ENCODE measurements at regions of chr1 and their contacts with region 1.

Region 1: DNA sequence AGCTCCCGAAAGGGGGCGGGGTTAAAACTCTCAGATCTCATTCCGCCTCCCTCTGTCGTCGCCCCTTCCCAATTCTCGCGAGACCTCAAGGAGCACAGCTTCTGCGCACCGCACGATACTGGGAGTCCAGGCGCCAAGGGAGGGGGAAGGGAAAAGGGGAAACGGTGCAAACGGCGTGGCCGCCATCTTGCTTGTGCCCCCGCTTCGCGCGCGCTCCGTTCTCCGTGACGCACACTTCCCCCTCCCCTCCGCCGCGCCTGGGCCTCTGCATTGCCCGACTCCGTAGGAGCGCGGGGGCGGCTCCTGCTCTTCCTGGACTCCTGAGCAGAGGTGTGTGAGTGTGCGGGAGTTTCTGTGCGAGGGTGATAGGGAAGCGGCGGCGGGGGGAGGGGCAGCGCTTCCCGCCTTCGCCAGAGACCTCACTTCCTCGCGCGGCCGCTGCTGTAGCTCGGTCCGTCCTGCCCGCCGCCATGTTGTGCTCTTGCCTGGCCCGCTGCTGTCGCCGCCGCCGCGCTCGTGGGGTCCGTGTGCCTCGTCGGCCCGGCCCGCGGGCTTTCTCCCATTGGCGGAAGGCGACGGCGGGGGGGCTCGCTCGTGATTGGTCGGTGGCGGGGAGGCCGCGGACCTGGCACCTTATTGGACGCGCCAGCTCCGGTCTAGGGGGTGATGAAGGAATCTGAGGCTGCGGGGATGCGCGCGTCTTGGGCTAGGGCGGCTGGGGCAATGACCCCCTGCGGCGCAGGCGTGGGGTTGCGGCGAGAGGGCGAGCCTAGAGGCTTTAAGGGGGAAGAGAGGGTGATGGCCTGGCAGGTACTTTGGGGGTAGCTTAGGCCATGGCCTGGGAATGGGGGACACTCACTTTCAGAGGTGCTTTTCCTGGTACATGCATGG is at the start of gene NFYC:
- DNase-seq: peak; percentile 88 to 99 (median 93)
- ATAC-seq: peak; percentile 77
- H3K4me3 ChIP-seq: peak within 1 kb of the TSS; percentile 67 to 97
- H3K4me3 Mint-ChIP-seq: peak within 1 kb of the TSS; percentile 92
- H3K27ac ChIP-seq: peak within 1 kb of the TSS; percentile 92 to 99
- H3K27ac Mint-ChIP-seq: peak within 1 kb of the TSS; percentile 96
- H3K4me1 ChIP-seq: peaks cover 25% of the 10 kb centered on the region
- H3K4me1 Mint-ChIP-seq: peaks cover 61% of the 10 kb centered on the region
- H3K27me3 ChIP-seq: no peaks in the 10 kb centered on the region
- H3K27me3 Mint-ChIP-seq: no peaks in the 10 kb centered on the region
- CTCF ChIP-seq: no peak
- total RNA-seq, gene NFYC: 31.3 to 31.6 TPM

Region 2: GRCh38 chr1:39575191-39576015 is 1116.4 kb before region 1 on chr1:
- CTCF ChIA-PET with region 1: no interaction called
- POLR2A ChIA-PET with region 1: no interaction called
- intact Hi-C with region 1: loop called in 1 of 2 experiments (anchors 5 kb)
- DNase-seq: peak; percentile 16 to 78 (median 57)
- ATAC-seq: peak; percentile 65
- H3K4me3 ChIP-seq: peak overlapping the region; percentile 64 to 75
- H3K4me3 Mint-ChIP-seq: peak overlapping the region; percentile 93
- H3K27ac ChIP-seq: peak overlapping the region; percentile 68 to 72
- H3K27ac Mint-ChIP-seq: peak overlapping the region; percentile 92
- H3K4me1 ChIP-seq: peaks cover 41% of the 10 kb centered on the region
- H3K4me1 Mint-ChIP-seq: peaks cover 44% of the 10 kb centered on the region
- H3K27me3 ChIP-seq: no peaks in the 10 kb centered on the region
- H3K27me3 Mint-ChIP-seq: no peaks in the 10 kb centered on the region
- CTCF ChIP-seq: no peak

Region 3: DNA sequence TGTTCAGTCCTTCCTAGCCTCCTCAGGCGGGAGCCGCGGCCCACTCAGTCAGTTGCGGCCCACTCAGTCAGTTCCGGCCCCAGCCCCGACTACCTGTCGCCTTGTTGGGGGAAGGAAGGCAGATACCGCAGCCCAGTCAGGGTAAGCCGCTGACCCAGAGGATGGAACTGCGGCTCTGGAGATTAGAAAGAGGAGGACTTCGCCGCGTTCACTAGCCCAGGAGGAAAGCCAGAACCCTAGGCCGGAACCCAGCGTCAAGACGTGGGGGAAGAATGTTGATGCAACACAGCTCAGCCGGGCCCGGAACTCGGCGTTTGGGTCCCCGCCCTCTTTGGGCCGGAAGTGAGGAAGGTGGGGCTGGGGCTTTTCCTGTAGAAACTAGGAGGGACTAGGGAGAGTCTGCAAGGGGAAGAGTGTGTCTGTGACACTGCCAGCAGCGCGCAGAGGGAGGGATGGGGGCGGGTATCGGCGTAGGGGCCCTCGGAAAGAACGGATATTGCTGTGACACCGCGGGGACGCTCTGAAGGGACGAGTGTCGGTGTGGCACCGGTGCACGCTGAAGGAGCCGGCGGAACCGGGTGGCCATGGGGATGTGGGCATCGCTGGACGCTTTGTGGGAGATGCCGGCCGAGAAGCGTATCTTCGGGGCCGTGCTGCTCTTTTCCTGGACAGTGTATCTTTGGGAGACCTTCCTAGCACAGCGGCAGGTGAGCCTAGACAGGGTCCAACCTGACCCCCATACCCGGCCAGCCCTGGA is 433.9 kb before region 1 on chr1 and contains the start of gene ZMPSTE24:
- CTCF ChIA-PET with region 1: no interaction called
- POLR2A ChIA-PET with region 1: no interaction called
- intact Hi-C with region 1: loop called in 1 of 2 experiments (anchors 5 kb)
- DNase-seq: peak; percentile 92 to 99 (median 95)
- ATAC-seq: peak; percentile 95
- H3K4me3 ChIP-seq: peak within 1 kb of the TSS; percentile 95 to 98
- H3K4me3 Mint-ChIP-seq: peak within 1 kb of the TSS; percentile 98
- H3K27ac ChIP-seq: peak within 1 kb of the TSS; percentile 88 to 99
- H3K27ac Mint-ChIP-seq: peak within 1 kb of the TSS; percentile 100
- H3K4me1 ChIP-seq: peaks cover 20% of the 10 kb centered on the region
- H3K4me1 Mint-ChIP-seq: peaks cover 56% of the 10 kb centered on the region
- H3K27me3 ChIP-seq: no peaks in the 10 kb centered on the region
- H3K27me3 Mint-ChIP-seq: no peaks in the 10 kb centered on the region
- CTCF ChIP-seq: no peak
- total RNA-seq, gene ZMPSTE24: 11.5 to 12.2 TPM

Region 4: GRCh38 chr1:40636767-40637166 is 55.0 kb before region 1 on chr1:
- CTCF ChIA-PET with region 1: no interaction called
- POLR2A ChIA-PET with region 1: no interaction called
- intact Hi-C with region 1: no loop called
- DNase-seq: no peak
- ATAC-seq: no peak
- H3K4me3 ChIP-seq: no peak overlapping the region
- H3K4me3 Mint-ChIP-seq: no peak overlapping the region
- H3K27ac ChIP-seq: no peak overlapping the region
- H3K27ac Mint-ChIP-seq: no peak overlapping the region
- H3K4me1 ChIP-seq: peaks cover 18% of the 10 kb centered on the region
- H3K4me1 Mint-ChIP-seq: peaks cover 15% of the 10 kb centered on the region
- H3K27me3 ChIP-seq: no peaks in the 10 kb centered on the region
- H3K27me3 Mint-ChIP-seq: no peaks in the 10 kb centered on the region
- CTCF ChIP-seq: no peak

Region 5: GRCh38 chr1:40668769-40669525 is 22.8 kb before region 1 on chr1:
- CTCF ChIA-PET with region 1: interaction called, 6 read pairs
- POLR2A ChIA-PET with region 1: interaction called, 10 read pairs
- intact Hi-C with region 1: loop called (anchors 1 to 2 kb)
- DNase-seq: peak; percentile 71 to 88 (median 86)
- ATAC-seq: peak; percentile 78
- H3K4me3 ChIP-seq: peak overlapping the region; percentile 37 to 46
- H3K4me3 Mint-ChIP-seq: peak overlapping the region; percentile 37
- H3K27ac ChIP-seq: no peak overlapping the region
- H3K27ac Mint-ChIP-seq: no peak overlapping the region
- H3K4me1 ChIP-seq: peaks cover 15% of the 10 kb centered on the region
- H3K4me1 Mint-ChIP-seq: peaks cover 13% of the 10 kb centered on the region
- H3K27me3 ChIP-seq: no peaks in the 10 kb centered on the region
- H3K27me3 Mint-ChIP-seq: no peaks in the 10 kb centered on the region
- CTCF ChIP-seq: peak; percentile 90

Region 6: GRCh38 chr1:40709100-40709801 is 17.5 kb after region 1 on chr1:
- CTCF ChIA-PET with region 1: interaction called, 3 read pairs
- POLR2A ChIA-PET with region 1: interaction called, 56 read pairs
- intact Hi-C with region 1: loop called (anchors 1 kb)
- DNase-seq: peak; percentile 43 to 94 (median 74)
- ATAC-seq: peak; percentile 95
- H3K4me3 ChIP-seq: peak overlapping the region; percentile 63
- H3K4me3 Mint-ChIP-seq: peak overlapping the region; percentile 99
- H3K27ac ChIP-seq: peak overlapping the region; percentile 67 to 94
- H3K27ac Mint-ChIP-seq: peak overlapping the region; percentile 98
- H3K4me1 ChIP-seq: peaks cover 48% of the 10 kb centered on the region
- H3K4me1 Mint-ChIP-seq: peaks cover 69% of the 10 kb centered on the region
- H3K27me3 ChIP-seq: no peaks in the 10 kb centered on the region
- H3K27me3 Mint-ChIP-seq: no peaks in the 10 kb centered on the region
- CTCF ChIP-seq: no peak

Region 7: DNA sequence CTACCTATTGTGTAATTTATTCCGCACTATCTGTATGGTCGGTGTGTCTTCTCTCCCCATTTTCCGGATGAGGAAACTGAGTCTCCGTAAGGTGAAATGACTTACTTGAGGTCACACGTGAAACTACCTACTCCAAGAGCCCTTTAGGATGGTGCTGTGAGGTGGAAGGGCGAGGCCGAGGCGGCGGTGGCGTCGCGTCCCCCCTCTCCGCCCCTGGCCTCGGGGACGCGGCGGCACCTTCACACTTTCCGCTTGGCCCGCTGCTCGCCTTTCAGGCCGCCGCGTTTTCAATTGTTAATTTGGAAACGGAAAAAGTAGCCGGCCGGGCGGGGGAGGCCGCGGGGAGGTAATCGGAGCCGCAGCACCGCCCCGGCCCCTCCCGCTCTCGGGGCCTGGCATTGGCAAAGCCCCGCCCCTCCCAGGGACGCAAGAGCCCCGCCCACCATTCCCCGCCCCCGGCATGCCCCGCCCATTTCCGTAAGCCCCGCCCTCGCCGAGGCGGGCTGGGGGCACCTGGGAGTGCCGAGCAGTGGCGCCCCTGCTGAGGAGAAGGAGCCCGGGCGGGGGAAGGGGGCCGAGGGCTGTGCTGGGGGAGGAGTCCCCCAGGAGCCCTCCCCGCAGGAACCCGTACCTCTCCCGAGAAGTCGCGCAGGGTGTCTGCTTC is 110.4 kb after region 1 on chr1:
- CTCF ChIA-PET with region 1: no interaction called
- POLR2A ChIA-PET with region 1: interaction called, 8 read pairs
- intact Hi-C with region 1: loop called (anchors 1 to 5 kb)
- DNase-seq: peak; percentile 69 to 93 (median 84)
- ATAC-seq: peak; percentile 95
- H3K4me3 ChIP-seq: peak overlapping the region; percentile 51 to 87
- H3K4me3 Mint-ChIP-seq: peak overlapping the region; percentile 74
- H3K27ac ChIP-seq: peak overlapping the region; percentile 49 to 55
- H3K27ac Mint-ChIP-seq: peak overlapping the region; percentile 75
- H3K4me1 ChIP-seq: peaks cover 29% of the 10 kb centered on the region
- H3K4me1 Mint-ChIP-seq: peaks cover 30% of the 10 kb centered on the region
- H3K27me3 ChIP-seq: no peaks in the 10 kb centered on the region
- H3K27me3 Mint-ChIP-seq: no peaks in the 10 kb centered on the region
- CTCF ChIP-seq: no peak

Region 8: DNA sequence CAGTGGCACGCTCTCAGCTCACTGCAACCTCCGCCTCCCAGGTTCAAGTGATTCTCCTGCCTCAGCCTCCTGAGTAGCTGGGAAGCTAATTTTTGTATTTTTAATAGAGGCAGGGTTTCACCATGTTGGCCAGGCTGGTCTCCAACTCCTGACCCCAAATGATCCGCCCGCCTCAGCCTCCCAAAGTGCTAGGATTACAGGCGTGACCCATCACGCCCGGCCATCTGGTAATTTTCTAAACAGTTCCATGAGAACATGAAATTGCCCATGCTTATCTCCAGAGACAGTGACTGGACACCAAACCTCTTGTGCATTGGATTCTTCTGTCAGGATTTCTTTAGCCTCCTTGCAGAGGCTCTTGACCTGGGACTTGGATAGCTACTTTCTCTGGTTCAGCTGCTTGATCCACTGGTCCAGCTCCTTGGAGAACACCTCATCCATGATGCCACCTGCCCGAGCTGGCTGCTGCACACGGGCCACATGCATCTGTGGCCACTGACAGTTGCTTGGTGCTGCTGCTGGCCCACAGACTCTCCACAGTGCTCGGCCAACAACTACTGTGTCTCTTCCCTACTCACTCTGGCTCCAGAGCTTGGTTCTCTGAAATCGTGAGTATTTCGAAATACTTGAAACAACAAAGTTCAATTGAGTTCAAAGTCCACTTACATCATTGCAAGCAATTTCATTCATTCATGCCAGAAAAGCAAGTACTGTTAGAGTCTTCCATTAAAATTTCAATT is 247.7 kb after region 1 on chr1:
- CTCF ChIA-PET with region 1: no interaction called
- POLR2A ChIA-PET with region 1: no interaction called
- intact Hi-C with region 1: no loop called
- DNase-seq: no peak
- ATAC-seq: no peak
- H3K4me3 ChIP-seq: no peak overlapping the region
- H3K4me3 Mint-ChIP-seq: no peak overlapping the region
- H3K27ac ChIP-seq: no peak overlapping the region
- H3K27ac Mint-ChIP-seq: no peak overlapping the region
- H3K4me1 ChIP-seq: no peaks in the 10 kb centered on the region
- H3K4me1 Mint-ChIP-seq: no peaks in the 10 kb centered on the region
- H3K27me3 ChIP-seq: peaks cover 0 to 2% of the 10 kb centered on the region in 2 experiments
- H3K27me3 Mint-ChIP-seq: peaks cover 5% of the 10 kb centered on the region
- CTCF ChIP-seq: no peak

Region 9: DNA sequence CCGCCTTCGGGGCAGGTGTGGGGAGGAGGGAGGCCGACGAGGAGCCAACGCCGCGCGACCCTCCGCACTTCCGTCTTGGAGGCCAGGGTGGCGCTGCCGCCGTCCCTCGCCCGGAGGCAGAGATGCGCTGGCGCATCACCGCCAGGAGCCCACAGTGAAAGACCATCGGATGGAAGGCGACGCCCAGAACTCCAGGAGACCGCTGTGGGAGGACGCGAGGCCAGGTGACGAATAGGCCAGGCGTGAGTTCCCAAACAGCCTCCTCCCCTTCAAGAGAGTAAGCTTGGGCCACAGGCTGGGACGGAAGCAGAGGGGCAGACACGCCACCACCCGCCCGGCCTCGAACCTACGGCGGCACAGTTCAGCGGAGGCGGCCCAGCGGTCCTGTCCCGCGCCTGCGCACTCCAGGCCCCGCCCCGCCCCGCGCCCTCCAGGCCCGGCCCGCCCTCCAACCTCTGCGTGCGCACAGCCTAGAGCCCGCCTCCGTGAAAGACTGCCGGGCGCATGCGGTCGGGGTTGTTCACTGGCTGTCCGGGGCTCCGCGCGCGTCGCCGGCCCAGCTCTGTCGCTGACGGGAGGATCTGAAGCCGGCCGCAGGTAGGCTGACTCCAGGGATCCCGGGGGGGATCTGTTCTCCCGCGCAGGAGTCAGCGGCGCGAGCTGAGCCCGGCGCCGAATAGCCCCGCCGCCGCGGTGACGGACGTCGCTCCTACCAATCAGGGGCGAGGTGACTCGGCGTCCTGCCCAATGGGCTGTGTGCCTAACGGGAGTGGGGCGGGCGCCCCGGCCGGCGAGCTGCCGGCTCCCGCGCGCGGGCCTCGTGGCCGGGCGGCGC is 287.7 kb after region 1 on chr1 and contains the start of gene CTPS1:
- CTCF ChIA-PET with region 1: no interaction called
- POLR2A ChIA-PET with region 1: interaction called, 10 read pairs
- intact Hi-C with region 1: no loop called
- DNase-seq: peak; percentile 92 to 98 (median 95)
- ATAC-seq: peak; percentile 81
- H3K4me3 ChIP-seq: peak within 1 kb of the TSS; percentile 83 to 91
- H3K4me3 Mint-ChIP-seq: peak within 1 kb of the TSS; percentile 95
- H3K27ac ChIP-seq: peak within 1 kb of the TSS; percentile 85 to 95
- H3K27ac Mint-ChIP-seq: peak within 1 kb of the TSS; percentile 97
- H3K4me1 ChIP-seq: peaks cover 16% of the 10 kb centered on the region
- H3K4me1 Mint-ChIP-seq: peaks cover 35% of the 10 kb centered on the region
- H3K27me3 ChIP-seq: no peaks in the 10 kb centered on the region
- H3K27me3 Mint-ChIP-seq: no peaks in the 10 kb centered on the region
- CTCF ChIP-seq: no peak
- total RNA-seq, gene CTPS1: 68.5 to 69.0 TPM

Measured in CD8-positive, alpha-beta T cell (primary cell).